ENCODE measurements at regions of chr17 and their contacts with region 1.

Region 1: DNA sequence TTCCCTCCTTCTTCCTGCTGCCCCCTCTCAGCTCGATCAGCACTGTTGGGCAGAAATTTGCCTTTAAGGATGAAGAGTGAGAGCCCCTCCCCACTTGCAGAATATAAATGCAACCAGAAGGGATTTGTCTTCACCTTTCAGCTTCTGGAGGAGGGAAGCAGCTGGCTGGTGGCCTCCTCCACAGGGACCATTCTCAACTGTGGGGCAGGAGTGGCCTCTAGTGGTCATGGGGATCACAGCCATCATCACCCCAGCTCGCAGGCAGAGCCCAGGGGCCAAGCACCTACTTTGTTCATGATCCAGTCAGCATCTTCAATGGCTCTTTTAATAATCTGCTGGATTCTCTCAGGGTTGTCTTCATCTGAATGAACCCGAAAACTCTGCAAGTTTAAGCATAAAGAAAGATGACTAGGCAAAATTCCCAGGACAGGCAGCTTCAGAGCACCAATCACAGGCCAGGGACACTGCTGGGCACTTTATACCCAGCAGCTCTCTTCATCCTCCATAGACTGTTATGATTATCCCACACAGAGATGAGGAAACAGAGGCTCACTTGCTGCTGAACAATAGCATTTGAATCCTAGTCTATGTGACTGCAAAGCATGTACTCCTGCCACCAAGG is 13.1 kb downstream of the LYRM9 start:
- DNase-seq: peak; percentile 78 to 83 (median 80)
- ATAC-seq: peak; percentile 94
- H3K4me3 ChIP-seq: no peak overlapping the region
- H3K27ac ChIP-seq: no peak overlapping the region
- H3K4me1 ChIP-seq: no peaks in the 10 kb centered on the region
- H3K27me3 ChIP-seq: no peaks in the 10 kb centered on the region
- CTCF ChIP-seq: peak; percentile 71 to 93 (median 85)
- POLR2A ChIP-seq: no peak

Region 2: DNA sequence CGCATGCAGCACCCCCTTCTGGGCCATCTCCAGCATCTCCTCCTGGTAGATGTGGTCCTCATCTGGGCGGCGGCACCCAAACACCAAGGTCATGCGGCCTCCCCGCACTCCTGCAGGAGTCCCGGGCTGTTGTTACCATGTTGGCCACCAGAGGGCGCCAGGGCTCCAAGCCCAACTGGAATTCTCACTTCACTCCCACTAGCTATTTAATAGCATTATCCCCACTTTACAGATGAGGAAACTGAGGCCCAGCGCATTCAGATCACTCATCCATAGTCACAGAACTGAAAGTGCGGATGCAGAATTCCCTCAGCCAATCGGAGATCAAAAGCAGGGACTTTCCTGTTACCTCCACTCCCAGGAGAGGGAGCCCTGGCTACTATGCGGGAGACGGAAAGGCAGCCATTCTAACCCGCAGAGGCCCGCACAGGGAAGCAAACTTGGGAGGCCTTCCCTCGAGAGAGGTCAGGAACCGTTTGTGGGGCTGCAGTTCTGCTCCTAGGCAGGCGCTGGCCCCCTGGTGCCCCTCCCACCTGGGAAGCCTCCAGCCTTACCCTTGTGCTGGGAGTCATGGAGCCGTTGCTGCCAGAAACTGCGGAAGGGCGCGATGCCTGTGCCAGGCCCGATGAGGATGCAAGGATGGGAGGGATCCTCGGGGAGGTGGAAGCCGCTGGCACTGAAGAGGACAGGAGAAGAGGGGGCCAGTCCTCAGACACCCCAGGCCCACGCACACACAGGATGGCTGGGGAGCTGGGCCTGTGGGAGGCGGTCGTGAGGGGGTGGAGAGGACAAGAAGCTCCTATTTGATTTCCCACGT is 119.8 kb before region 1 on chr17:
- intact Hi-C with region 1: loop called (anchors 5 kb)
- DNase-seq: peak; percentile 66 to 81 (median 72)
- ATAC-seq: peak; percentile 51
- H3K4me3 ChIP-seq: no peak overlapping the region
- H3K27ac ChIP-seq: no peak overlapping the region
- H3K4me1 ChIP-seq: no peaks in the 10 kb centered on the region
- H3K27me3 ChIP-seq: no peaks in the 10 kb centered on the region
- CTCF ChIP-seq: peak; percentile 75 to 95 (median 85)
- POLR2A ChIP-seq: no peak

Region 3: DNA sequence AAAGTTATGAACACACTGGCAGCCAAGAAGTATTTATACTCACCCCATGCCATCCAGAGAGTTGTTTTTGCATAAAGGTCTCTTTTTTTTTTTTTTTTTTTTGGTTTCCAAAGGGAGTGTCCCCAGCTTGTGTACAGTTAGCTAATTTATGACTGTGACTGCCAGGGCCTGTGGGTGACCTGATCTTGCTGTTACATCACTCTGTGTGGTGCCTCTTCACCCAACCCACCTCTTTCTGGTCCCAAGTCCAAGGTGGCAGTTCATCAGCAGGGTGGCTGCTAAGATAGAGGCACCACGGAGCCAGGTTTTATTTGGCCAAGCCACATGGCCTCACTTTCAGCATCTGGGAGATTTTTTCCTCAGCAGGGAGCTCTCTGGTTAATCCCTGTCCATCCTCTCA is 79.6 kb before region 1 on chr17 and contains the start of gene NOS2:
- intact Hi-C with region 1: loop called (anchors 2 kb)
- DNase-seq: no peak
- ATAC-seq: no peak
- H3K4me3 ChIP-seq: no peak within 1 kb of the TSS
- H3K27ac ChIP-seq: no peak within 1 kb of the TSS
- H3K4me1 ChIP-seq: no peaks in the 10 kb centered on the region
- H3K27me3 ChIP-seq: no peaks in the 10 kb centered on the region
- CTCF ChIP-seq: no peak
- POLR2A ChIP-seq: no peak
- total RNA-seq, gene NOS2: 0.26 to 0.33 TPM

Measured in body of pancreas (tissue), 4 donors.